IMR-90 (cell line): ENCODE measurements at regions of chr4 and their contacts with region 1.

Region 1: DNA sequence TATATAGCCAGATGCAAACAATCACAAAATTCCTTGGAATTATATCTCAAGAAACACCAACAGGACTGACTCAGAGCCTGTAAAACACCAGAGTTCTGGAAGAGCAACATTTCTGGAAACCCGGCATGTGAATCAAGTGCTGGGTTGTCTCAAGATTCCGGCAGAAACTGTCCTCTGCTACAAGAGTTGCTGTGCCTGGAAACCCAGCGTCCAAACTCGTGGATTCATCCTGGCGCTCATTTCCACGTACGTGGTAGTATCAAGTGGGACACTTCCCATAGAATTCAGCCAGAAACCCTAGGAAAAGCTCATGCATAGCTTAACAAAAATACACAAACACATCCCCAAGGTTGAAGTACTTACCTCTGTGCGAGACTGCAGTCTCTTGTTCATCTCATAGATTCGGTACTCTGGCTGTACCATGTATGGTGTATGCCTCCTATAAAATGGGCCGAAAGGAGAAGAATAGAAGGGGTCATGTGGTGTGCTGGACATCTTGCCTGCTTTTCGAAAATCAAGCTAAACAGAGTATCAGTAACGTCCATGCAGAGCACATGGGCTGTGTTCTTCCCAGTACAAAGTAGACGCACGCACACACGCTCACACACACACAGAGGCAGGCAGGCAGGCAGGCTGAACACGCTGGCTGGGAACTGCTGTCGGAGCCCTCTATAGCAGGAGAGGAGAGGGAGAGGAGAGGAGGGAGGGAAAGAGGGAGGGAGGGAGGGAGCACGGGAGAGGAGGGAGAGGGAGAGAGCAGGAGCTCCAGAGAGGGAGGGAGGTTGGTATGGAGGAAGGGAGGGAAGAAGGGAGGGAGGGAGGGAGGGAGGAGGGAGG is at the start of gene LDB2:
- DNase-seq: peak; percentile 88
- ATAC-seq: peak; percentile 81
- H3K4me3 ChIP-seq: peak within 1 kb of the TSS; percentile 88
- H3K27ac ChIP-seq: peak within 1 kb of the TSS; percentile 99
- H3K4me1 ChIP-seq: peaks cover 11% of the 10 kb centered on the region
- H3K27me3 ChIP-seq: no peaks in the 10 kb centered on the region
- CTCF ChIP-seq: no peak
- POLR2A ChIP-seq: no peak
- RAD21 ChIP-seq: no peak; the same call in 1 of the 2 replicates
- total RNA-seq, gene LDB2: 92.8 and 116 TPM in 2 replicates

Region 2: DNA sequence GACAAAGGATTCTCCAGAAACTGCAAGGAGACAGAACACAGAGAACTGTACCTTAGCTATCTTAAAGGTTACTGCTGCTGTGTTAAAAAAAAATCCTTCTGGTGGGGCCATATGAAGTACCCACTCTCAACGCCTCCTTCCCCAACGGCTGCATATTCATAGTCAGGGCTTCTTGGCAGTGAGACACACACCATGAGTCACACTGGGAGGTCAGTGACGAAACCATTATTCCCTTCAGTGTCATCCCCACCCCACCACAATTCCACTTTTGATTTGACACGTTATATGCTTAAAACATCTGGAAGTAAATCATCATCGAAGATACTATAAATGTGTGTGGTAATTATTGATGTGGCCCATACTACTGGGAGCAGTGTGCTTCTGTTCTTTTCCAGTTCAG is 271.3 kb before region 1 on chr4:
- CTCF ChIA-PET with region 1: no interaction called
- POLR2A ChIA-PET with region 1: no interaction called
- dilution Hi-C with region 1: no loop called
- in situ Hi-C with region 1: no loop called
- intact Hi-C with region 1: loop called (anchors 10 kb)
- DNase-seq: peak; percentile 98
- ATAC-seq: peak; percentile 86
- H3K4me3 ChIP-seq: no peak overlapping the region
- H3K27ac ChIP-seq: peak overlapping the region; percentile 77; the same call in 1 of the 2 replicates
- H3K4me1 ChIP-seq: peaks cover 20% of the 10 kb centered on the region
- H3K27me3 ChIP-seq: no peaks in the 10 kb centered on the region
- CTCF ChIP-seq: no peak
- POLR2A ChIP-seq: no peak
- RAD21 ChIP-seq: peak; percentile 12; the same call in 1 of the 2 replicates

Region 3: GRCh38 chr4:16794816-16795445 is 103.3 kb before region 1 on chr4:
- CTCF ChIA-PET with region 1: interaction called, 6 read pairs
- POLR2A ChIA-PET with region 1: no interaction called
- dilution Hi-C with region 1: no loop called
- in situ Hi-C with region 1: no loop called
- intact Hi-C with region 1: loop called (anchors 2 kb)
- DNase-seq: peak; percentile 60
- ATAC-seq: peak; percentile 80
- H3K4me3 ChIP-seq: no peak overlapping the region
- H3K27ac ChIP-seq: no peak overlapping the region
- H3K4me1 ChIP-seq: no peaks in the 10 kb centered on the region
- H3K27me3 ChIP-seq: no peaks in the 10 kb centered on the region
- CTCF ChIP-seq: peak; percentile 84
- POLR2A ChIP-seq: no peak
- RAD21 ChIP-seq: peak; percentile 91

Region 4: GRCh38 chr4:16884673-16885460 is 13.3 kb before region 1 on chr4:
- CTCF ChIA-PET with region 1: no interaction called
- POLR2A ChIA-PET with region 1: no interaction called
- dilution Hi-C with region 1: no loop called
- in situ Hi-C with region 1: no loop called
- intact Hi-C with region 1: no loop called
- DNase-seq: no peak
- ATAC-seq: no peak
- H3K4me3 ChIP-seq: no peak overlapping the region
- H3K27ac ChIP-seq: no peak overlapping the region
- H3K4me1 ChIP-seq: peaks cover 2% of the 10 kb centered on the region; the same call in 1 of the 2 replicates
- H3K27me3 ChIP-seq: no peaks in the 10 kb centered on the region
- CTCF ChIP-seq: 0 out of 2 replicates have a peak, but pooled peaks have one; percentile 4
- POLR2A ChIP-seq: no peak
- RAD21 ChIP-seq: no peak

Region 5: GRCh38 chr4:16909281-16909680 is 11.1 kb after region 1 on chr4:
- CTCF ChIA-PET with region 1: interaction called, 3 read pairs
- POLR2A ChIA-PET with region 1: interaction called, 10 read pairs
- dilution Hi-C with region 1: no loop called
- in situ Hi-C with region 1: no loop called
- intact Hi-C with region 1: no loop called
- DNase-seq: no peak
- ATAC-seq: no peak
- H3K4me3 ChIP-seq: no peak overlapping the region
- H3K27ac ChIP-seq: no peak overlapping the region
- H3K4me1 ChIP-seq: 0 out of 2 replicates have a peak, but pooled peaks cover 2% of the 10 kb centered on the region
- H3K27me3 ChIP-seq: no peaks in the 10 kb centered on the region
- CTCF ChIP-seq: no peak
- POLR2A ChIP-seq: no peak
- RAD21 ChIP-seq: no peak

Region 6: DNA sequence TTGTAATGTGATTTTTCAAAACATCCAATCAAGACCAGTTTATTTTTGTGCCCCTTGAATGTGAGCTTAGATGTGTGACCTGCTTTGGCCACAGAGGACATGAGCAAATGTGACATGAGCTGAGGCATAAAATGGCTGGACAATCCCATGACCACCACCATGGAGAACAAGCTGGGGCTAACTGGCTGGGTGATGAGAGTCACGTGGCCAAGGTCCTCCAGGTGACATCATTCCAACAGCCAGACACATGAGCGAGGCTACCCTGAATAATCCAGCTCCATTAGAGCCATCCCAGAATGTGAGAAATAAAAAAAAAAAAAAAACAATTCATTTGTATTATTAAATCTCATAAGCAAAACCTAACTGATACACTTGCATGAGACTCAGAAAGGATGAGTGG is 90.6 kb after region 1 on chr4:
- CTCF ChIA-PET with region 1: no interaction called
- POLR2A ChIA-PET with region 1: no interaction called
- dilution Hi-C with region 1: no loop called
- in situ Hi-C with region 1: no loop called
- intact Hi-C with region 1: no loop called
- DNase-seq: no peak
- ATAC-seq: no peak
- H3K4me3 ChIP-seq: no peak overlapping the region
- H3K27ac ChIP-seq: no peak overlapping the region
- H3K4me1 ChIP-seq: no peaks in the 10 kb centered on the region
- H3K27me3 ChIP-seq: no peaks in the 10 kb centered on the region
- CTCF ChIP-seq: no peak
- POLR2A ChIP-seq: no peak
- RAD21 ChIP-seq: no peak

Region 7: DNA sequence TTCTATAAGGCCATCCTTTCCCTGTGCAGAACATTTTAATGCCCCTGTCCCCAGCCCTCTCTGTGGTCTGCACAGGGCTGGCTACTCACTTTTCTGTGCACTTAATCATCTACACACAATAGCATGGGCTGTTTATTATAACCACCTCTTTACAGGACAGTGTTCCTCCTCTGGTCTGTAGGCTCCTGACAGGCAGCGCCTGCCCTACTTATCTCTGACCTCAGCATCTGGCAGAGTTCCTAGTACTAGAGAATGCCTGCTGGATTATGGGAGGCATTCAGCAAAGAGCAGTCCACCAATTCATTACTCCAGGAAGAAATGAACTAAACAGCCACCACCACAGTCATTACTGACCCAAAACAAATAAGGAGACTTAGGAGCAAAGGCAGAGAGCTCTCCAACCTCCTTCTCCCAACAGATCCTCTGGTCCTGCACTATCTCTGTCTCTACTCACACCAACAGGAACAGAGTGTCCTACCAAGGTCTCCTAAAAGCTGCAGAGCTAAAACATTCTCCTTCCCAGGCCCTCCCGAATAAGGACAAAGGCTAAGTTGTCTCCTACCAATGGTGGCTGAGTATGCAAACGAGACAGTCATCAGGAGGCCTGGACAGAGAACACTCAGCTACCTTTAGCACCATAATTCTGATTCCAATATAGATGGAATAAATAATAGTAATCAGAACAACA is 334.5 kb after region 1 on chr4:
- CTCF ChIA-PET with region 1: no interaction called
- POLR2A ChIA-PET with region 1: no interaction called
- dilution Hi-C with region 1: no loop called
- in situ Hi-C with region 1: no loop called
- intact Hi-C with region 1: loop called (anchors 5 kb)
- DNase-seq: peak; percentile 84
- ATAC-seq: peak; percentile 90
- H3K4me3 ChIP-seq: no peak overlapping the region
- H3K27ac ChIP-seq: no peak overlapping the region
- H3K4me1 ChIP-seq: peaks cover 10% of the 10 kb centered on the region
- H3K27me3 ChIP-seq: no peaks in the 10 kb centered on the region
- CTCF ChIP-seq: no peak
- POLR2A ChIP-seq: no peak
- RAD21 ChIP-seq: no peak

Region 8: GRCh38 chr4:17324386-17324830 is 426.2 kb after region 1 on chr4:
- CTCF ChIA-PET with region 1: interaction called, 8 read pairs
- POLR2A ChIA-PET with region 1: no interaction called
- dilution Hi-C with region 1: no loop called
- in situ Hi-C with region 1: loop called (anchors 25 kb)
- intact Hi-C with region 1: loop called (anchors 1 kb)
- DNase-seq: peak; percentile 77
- ATAC-seq: peak; percentile 86
- H3K4me3 ChIP-seq: no peak overlapping the region; the same call in 1 of the 2 replicates
- H3K27ac ChIP-seq: peak overlapping the region; percentile 73; the same call in 1 of the 2 replicates
- H3K4me1 ChIP-seq: peaks cover 4% of the 10 kb centered on the region; the same call in 1 of the 2 replicates
- H3K27me3 ChIP-seq: no peaks in the 10 kb centered on the region
- CTCF ChIP-seq: peak; percentile 89
- POLR2A ChIP-seq: peak; percentile 42; the same call in 1 of the 2 replicates
- RAD21 ChIP-seq: peak; percentile 94

Region 9: DNA sequence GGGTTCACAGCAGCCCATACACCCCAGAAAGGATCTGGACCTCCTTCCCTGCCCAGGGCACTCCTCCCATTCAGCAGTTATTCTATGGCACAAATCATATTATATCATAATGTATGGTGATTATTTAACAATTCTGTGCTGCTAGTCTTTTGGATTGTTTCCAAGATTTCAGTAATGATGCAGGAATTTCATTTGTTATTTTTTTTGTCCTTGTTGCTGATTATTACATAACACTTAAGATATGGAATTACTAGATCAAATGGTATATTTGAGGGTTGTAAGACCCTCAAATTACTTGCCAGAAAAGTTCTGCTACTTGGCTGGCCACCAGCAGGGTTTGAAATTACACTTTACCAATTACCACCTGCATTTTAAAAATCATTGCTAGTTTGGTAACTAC is 577.3 kb after region 1 on chr4:
- CTCF ChIA-PET with region 1: no interaction called
- POLR2A ChIA-PET with region 1: no interaction called
- dilution Hi-C with region 1: no loop called
- in situ Hi-C with region 1: no loop called
- intact Hi-C with region 1: loop called (anchors 10 kb)
- DNase-seq: peak; percentile 59
- ATAC-seq: 0 out of 2 replicates have a peak, but pooled peaks have one; percentile 11
- H3K4me3 ChIP-seq: no peak overlapping the region
- H3K27ac ChIP-seq: no peak overlapping the region
- H3K4me1 ChIP-seq: no peaks in the 10 kb centered on the region
- H3K27me3 ChIP-seq: no peaks in the 10 kb centered on the region
- CTCF ChIP-seq: no peak
- POLR2A ChIP-seq: no peak
- RAD21 ChIP-seq: no peak